ENCODE measurements at regions of chr16 and their contacts with region 1.

Region 1: DNA sequence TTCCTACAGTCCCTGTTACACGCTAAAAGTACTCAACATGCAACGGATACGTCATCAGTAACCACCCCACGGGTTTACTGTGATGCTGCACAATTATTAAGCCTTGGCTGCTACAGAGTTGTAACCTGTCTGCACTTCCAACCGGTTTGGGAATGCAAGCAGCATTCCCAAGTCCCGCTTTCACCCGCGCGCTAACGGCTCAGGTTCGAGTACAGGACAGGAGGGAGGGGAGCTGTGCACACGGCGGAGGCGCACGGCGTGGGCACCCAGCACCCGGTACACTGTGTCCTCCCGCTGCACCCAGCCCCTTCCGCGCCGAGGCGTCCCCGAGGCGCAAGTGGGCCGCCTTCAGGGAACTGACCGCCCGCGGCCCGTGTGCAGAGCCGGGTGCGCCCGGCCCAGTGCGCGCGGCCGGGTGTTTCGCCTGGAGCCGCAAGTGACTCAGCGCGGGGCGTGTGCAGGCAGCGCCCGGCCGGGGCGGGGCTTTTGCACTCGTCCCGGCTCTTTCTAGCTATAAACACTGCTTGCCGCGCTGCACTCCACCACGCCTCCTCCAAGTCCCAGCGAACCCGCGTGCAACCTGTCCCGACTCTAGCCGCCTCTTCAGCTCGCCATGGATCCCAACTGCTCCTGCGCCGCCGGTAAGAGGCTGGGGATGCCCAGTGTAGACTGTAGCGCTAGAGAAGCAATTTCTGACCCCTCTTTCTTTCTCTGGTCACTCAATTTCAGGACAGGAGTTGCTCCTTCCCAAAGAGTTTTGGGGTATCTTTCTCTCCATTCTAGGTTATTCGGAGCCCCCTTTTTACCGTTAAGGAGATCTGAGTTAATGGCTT is at the start of gene MT2A:
- DNase-seq: peak; percentile 94 to 97
- ATAC-seq: peak; percentile 18 to 19
- H3K4me3 ChIP-seq: peak within 1 kb of the TSS; percentile 60 to 75 (median 70)
- H3K27ac ChIP-seq: peak within 1 kb of the TSS; percentile 95 to 99 (median 98)
- H3K4me1 ChIP-seq: peaks cover 71 to 83% of the 10 kb centered on the region in 2 donors
- H3K27me3 ChIP-seq: no peaks in the 10 kb centered on the region
- CTCF ChIP-seq: peak in 1 of 5 experiments; percentile 11
- POLR2A ChIP-seq: peak in 1 of 2 donors; percentile 99
- total RNA-seq, gene MT2A: 250 to 1,131 (median 795) TPM

Region 2: DNA sequence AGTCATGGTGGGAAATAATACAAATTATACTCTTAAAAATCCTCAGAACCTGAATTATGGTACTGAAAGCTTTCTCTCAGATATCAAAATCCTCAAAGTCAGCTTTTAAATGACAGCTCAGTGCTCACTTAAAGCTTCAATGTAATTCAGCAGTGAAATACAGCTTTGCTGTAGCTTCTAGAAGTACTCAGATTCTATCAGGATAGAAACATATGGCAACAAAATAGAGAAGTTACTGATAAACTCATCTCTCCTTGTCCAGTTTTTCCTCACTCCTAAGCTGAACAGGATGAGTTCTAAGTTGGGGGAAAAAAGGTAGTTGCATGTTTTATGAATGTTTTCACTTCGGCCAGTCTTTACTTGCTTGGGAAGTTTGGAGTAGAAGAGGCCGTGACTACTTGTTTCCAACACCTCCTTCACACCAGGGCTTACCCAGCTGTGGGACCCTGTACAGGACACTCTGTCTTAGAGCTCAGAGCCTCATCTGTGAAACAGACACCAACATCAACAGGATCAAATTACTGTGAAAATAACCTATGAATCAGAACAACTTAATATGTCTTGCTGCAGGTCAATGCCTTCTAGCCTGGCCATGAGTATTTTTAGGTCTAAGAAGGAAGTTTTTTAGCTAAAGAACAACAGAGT is 126.7 kb before region 1 on chr16:
- in situ Hi-C with region 1: no loop called
- intact Hi-C with region 1: loop called (anchors 2 kb)
- DNase-seq: peak; percentile 83 to 89
- ATAC-seq: peak; percentile 86 to 91
- H3K4me3 ChIP-seq: no peak overlapping the region
- H3K27ac ChIP-seq: peak overlapping the region; percentile 92 to 98 (median 94)
- H3K4me1 ChIP-seq: peaks cover 38 to 62% of the 10 kb centered on the region in 2 donors
- H3K27me3 ChIP-seq: no peaks in the 10 kb centered on the region
- CTCF ChIP-seq: no peak
- POLR2A ChIP-seq: peak; percentile 45 to 66

Region 3: DNA sequence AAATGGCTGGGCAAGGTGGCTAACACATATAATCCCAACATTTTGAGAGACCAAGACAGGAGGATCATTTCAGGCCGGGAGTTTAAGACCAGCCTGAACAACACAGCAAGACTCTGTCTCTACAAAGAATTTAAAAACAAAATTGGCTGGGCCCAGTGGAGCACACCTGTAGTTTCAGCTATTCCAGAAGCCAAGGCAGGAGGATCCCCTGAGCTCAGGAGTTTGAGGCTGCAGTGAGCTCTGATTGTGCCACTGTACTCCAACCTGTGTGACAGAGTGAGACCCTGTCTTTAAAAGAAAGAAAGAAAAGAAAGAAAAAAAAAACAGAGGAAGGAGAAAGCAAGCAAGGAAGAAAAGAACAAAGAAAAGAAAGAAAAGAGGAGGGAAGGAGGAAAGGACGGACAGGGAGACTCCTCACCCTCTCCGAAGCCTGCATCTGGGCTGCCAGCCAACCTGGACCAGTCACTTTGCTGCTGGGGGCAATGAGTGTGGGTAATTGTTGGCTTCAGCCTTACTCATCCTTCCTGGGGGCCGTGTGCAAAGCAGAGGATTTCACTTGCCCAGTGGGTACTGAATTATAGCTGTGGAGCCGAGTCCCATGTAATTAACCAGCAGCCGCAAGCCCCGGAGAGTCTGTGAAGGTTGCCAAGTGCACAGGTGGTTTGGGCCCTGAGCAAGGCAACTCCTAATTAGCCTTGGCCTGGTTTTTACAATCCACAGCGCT is 50.1 kb before region 1 on chr16:
- in situ Hi-C with region 1: no loop called
- intact Hi-C with region 1: no loop called
- DNase-seq: no peak
- ATAC-seq: no peak
- H3K4me3 ChIP-seq: no peak overlapping the region
- H3K27ac ChIP-seq: no peak overlapping the region
- H3K4me1 ChIP-seq: no peaks in the 10 kb centered on the region
- H3K27me3 ChIP-seq: no peaks in the 10 kb centered on the region
- CTCF ChIP-seq: no peak
- POLR2A ChIP-seq: no peak

Region 4: GRCh38 chr16:56625140-56625942 is 17.1 kb after region 1 on chr16 and contains the start of gene MT1E:
- in situ Hi-C with region 1: no loop called
- intact Hi-C with region 1: loop called (anchors 1 kb)
- DNase-seq: peak; percentile 43 to 83
- ATAC-seq: peak; percentile 77 to 80
- H3K4me3 ChIP-seq: peak within 1 kb of the TSS; percentile 66 to 84 (median 74)
- H3K27ac ChIP-seq: peak within 1 kb of the TSS; percentile 88 to 96 (median 92)
- H3K4me1 ChIP-seq: peaks cover 18 to 23% of the 10 kb centered on the region in 2 donors
- H3K27me3 ChIP-seq: no peaks in the 10 kb centered on the region
- CTCF ChIP-seq: no peak
- POLR2A ChIP-seq: peak; percentile 88 to 91
- total RNA-seq, gene MT1E: 63.0 to 434 (median 267) TPM

Region 5: DNA sequence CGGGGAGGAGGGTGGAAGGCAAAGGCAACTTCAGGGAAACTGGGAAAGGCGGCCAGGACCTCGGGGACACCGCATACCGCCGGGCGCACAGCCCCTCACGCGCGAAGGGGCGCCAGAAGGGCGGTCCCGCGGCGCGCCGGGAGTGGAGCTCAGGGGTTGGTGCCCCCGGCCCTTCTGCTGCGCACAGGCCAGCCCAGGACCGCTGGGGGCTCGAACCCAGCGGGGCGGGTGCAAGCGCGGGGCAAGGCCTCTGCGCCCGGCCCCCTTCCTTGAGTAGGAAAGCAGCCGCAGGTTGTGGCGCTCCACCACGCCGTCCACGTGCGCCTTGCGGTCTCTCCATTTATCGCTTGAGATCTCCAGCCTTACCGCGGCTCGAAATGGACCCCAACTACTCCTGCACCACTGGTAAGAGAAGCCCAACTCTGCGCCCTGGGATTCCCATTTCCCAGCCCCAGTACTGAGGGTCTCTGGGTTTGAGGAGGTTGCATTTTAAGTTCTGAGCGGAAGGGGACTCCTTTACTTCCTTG is 27.2 kb after region 1 on chr16:
- in situ Hi-C with region 1: no loop called
- intact Hi-C with region 1: no loop called
- DNase-seq: no peak
- ATAC-seq: no peak
- H3K4me3 ChIP-seq: peak overlapping the region in 1 of 4 donors; percentile 3
- H3K27ac ChIP-seq: no peak overlapping the region
- H3K4me1 ChIP-seq: peaks cover 8 to 16% of the 10 kb centered on the region in 2 donors
- H3K27me3 ChIP-seq: peaks cover 3 to 7% (median 6%) of the 10 kb centered on the region in 3 donors
- CTCF ChIP-seq: no peak
- POLR2A ChIP-seq: no peak

Region 6: GRCh38 chr16:56681939-56682702 is 73.9 kb after region 1 on chr16 and contains the start of gene MT1X:
- in situ Hi-C with region 1: loop called in 2 of 4 experiments (anchors 5 kb)
- intact Hi-C with region 1: loop called (anchors 1 kb)
- DNase-seq: peak; percentile 95 to 97
- ATAC-seq: peak; percentile 28 to 29
- H3K4me3 ChIP-seq: peak within 1 kb of the TSS; percentile 66 to 83 (median 78)
- H3K27ac ChIP-seq: peak within 1 kb of the TSS; percentile 89 to 94 (median 91)
- H3K4me1 ChIP-seq: peaks cover 45 to 46% of the 10 kb centered on the region in 2 donors
- H3K27me3 ChIP-seq: no peaks in the 10 kb centered on the region
- CTCF ChIP-seq: no peak
- POLR2A ChIP-seq: peak in 1 of 2 donors; percentile 99
- total RNA-seq, gene MT1X: 3,871 to 10,589 (median 6,239) TPM